ENCODE measurements at regions of chr17 and their contacts with region 1.

Region 1: DNA sequence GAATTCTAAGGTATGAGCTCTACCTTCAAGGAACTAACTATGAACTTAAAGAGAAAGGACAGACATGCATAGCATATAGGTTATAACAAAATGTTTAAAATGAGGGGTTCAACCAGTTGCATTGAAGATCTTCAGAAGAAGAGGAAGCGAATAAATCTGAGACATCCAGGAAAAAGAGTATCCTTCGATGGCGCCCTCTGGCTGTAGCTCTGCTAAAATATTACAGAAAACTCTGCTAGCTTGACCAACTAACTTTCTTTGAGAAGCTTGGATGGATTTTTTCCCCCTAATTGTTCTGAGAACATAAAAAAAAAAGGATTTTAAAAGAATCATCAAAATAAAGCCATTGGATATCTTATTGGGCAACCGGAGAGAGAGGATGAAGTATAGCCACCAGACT is 659.9 kb upstream of the SOX9 start:
- DNase-seq: no peak
- H3K4me3 ChIP-seq: no peak overlapping the region
- H3K27ac ChIP-seq: no peak overlapping the region
- H3K4me1 ChIP-seq: no peaks in the 10 kb centered on the region
- H3K27me3 ChIP-seq: no peaks in the 10 kb centered on the region
- CTCF ChIP-seq: peak; percentile 49

Region 2: GRCh38 chr17:70763018-70763417 is 697.9 kb before region 1 on chr17:
- intact Hi-C with region 1: loop called (anchors 5 kb)
- DNase-seq: no peak
- H3K4me3 ChIP-seq: no peak overlapping the region
- H3K27ac ChIP-seq: no peak overlapping the region
- H3K4me1 ChIP-seq: no peaks in the 10 kb centered on the region
- H3K27me3 ChIP-seq: no peaks in the 10 kb centered on the region
- CTCF ChIP-seq: no peak

Region 3: DNA sequence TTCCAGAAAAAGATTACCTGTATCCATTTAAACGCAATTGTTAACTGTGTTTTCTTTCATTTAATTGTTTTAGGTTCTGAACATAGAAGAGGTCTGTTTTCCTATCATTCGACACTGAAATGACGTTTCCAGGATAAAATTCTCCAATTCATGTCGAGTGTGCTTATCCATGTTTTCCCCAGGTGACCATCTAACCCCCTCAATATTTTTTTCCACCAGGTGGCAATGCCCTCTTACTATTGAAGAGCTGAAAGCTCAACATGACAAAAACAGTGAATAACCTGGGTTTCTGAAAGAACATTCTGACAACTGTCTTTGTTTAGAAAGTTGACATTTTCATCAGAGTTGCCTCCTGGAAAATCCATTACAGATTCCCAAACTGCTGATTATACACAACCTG is 342.9 kb before region 1 on chr17:
- intact Hi-C with region 1: loop called (anchors 5 kb)
- DNase-seq: no peak
- H3K4me3 ChIP-seq: no peak overlapping the region
- H3K27ac ChIP-seq: no peak overlapping the region
- H3K4me1 ChIP-seq: no peaks in the 10 kb centered on the region
- H3K27me3 ChIP-seq: peaks cover 19% of the 10 kb centered on the region
- CTCF ChIP-seq: peak; percentile 61

Region 4: DNA sequence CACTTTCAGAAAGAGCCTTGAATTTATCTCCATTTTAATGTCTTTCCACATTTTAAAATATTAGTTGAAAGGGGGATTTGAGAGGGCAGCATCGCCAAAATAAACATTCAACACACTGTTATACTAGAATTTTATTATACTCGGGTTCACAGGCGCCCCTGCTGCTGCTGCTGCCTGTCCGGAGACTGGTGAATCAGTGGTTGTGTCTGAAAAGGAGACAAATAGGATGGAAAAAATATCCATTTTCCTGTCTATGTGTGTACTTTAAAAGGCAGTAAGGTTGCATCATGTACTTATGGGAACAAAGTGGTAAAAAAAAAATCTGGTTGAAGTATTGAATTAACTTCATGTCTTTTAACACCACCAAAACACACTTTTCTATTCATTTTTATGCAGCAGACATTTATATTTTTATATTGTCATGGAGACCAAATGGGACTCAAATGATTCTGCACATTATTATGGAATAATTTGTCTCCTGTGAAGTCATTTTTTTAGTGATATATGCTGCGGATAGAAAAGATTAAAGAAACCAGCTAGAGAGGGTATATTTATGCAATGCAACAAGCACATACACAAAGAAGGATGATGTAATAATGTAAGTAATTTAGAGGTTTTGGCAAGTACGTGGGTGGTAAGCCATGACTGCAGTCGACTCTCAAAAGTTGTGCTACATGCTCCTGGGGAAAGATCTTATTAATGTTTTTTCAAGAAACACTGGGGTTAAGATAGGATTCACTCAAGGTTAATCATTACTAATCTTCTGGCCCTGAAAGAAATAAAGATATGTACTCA is 99.1 kb before region 1 on chr17:
- intact Hi-C with region 1: no loop called
- DNase-seq: no peak
- H3K4me3 ChIP-seq: no peak overlapping the region
- H3K27ac ChIP-seq: no peak overlapping the region
- H3K4me1 ChIP-seq: no peaks in the 10 kb centered on the region
- H3K27me3 ChIP-seq: no peaks in the 10 kb centered on the region
- CTCF ChIP-seq: no peak

Region 5: GRCh38 chr17:71412803-71413202 is 48.1 kb before region 1 on chr17:
- intact Hi-C with region 1: no loop called
- DNase-seq: no peak
- H3K4me3 ChIP-seq: no peak overlapping the region
- H3K27ac ChIP-seq: no peak overlapping the region
- H3K4me1 ChIP-seq: no peaks in the 10 kb centered on the region
- H3K27me3 ChIP-seq: no peaks in the 10 kb centered on the region
- CTCF ChIP-seq: no peak

Region 6: GRCh38 chr17:71600137-71600789 is 139.3 kb after region 1 on chr17:
- intact Hi-C with region 1: no loop called
- DNase-seq: no peak
- H3K4me3 ChIP-seq: no peak overlapping the region
- H3K27ac ChIP-seq: no peak overlapping the region
- H3K4me1 ChIP-seq: no peaks in the 10 kb centered on the region
- H3K27me3 ChIP-seq: no peaks in the 10 kb centered on the region
- CTCF ChIP-seq: no peak

Region 7: GRCh38 chr17:72539981-72540897 is 1079.3 kb after region 1 on chr17:
- intact Hi-C with region 1: loop called (anchors 10 kb)
- DNase-seq: peak; percentile 68
- H3K4me3 ChIP-seq: peak overlapping the region; percentile 45
- H3K27ac ChIP-seq: peak overlapping the region; percentile 48
- H3K4me1 ChIP-seq: peaks cover 12% of the 10 kb centered on the region
- H3K27me3 ChIP-seq: peaks cover 49% of the 10 kb centered on the region
- CTCF ChIP-seq: peak; percentile 88

Measured in left ventricle myocardium inferior (tissue), 1 donor.